Mammary epithelial cell (primary cell): ENCODE measurements at regions of chr3 and their contacts with region 1.

Region 1: GRCh38 chr3:159988617-159989271 is at the start of gene IL12A:
- DNase-seq: peak; percentile 54
- H3K4me3 ChIP-seq: peak within 1 kb of the TSS; percentile 64 to 79 (median 79)
- H3K27ac ChIP-seq: no peak within 1 kb of the TSS
- H3K4me1 ChIP-seq: peaks cover 19% of the 10 kb centered on the region
- H3K27me3 ChIP-seq: no peaks in the 10 kb centered on the region
- CTCF ChIP-seq: peak; percentile 83 to 95
- total RNA-seq, gene IL12A: 0.83 to 1.3 TPM

Region 2: DNA sequence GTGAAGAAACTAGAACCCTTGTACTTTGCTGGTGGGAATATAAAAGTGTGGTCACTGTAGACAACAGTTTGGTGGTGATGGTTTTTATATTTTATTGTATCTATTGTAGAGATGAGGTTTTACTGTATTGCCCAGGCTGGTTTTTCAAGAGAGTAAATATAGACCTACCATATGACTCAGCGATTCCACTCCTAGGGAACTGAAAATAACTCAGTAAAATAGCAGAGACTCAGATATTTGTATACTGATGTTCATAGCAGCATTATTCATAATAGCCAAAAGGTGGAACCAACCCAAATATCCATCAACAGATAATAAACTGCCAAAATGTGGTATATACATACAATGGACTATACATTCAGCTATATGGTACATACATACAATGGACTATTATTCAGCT is 68.9 kb before region 1 on chr3:
- CTCF ChIA-PET with region 1: interaction called, 4 read pairs
- dilution Hi-C with region 1: loop called (anchors 5 kb)
- in situ Hi-C with region 1: no loop called
- intact Hi-C with region 1: loop called (anchors 5 kb)
- DNase-seq: peak; percentile 29
- H3K4me3 ChIP-seq: no peak overlapping the region
- H3K27ac ChIP-seq: no peak overlapping the region
- H3K4me1 ChIP-seq: peaks cover 3% of the 10 kb centered on the region
- H3K27me3 ChIP-seq: no peaks in the 10 kb centered on the region
- CTCF ChIP-seq: no peak

Region 3: GRCh38 chr3:159929435-159930141 is 59.2 kb before region 1 on chr3:
- CTCF ChIA-PET with region 1: no interaction called
- dilution Hi-C with region 1: loop called (anchors 5 kb)
- in situ Hi-C with region 1: no loop called
- intact Hi-C with region 1: loop called (anchors 5 kb)
- DNase-seq: peak; percentile 50
- H3K4me3 ChIP-seq: no peak overlapping the region
- H3K27ac ChIP-seq: peak overlapping the region; percentile 85
- H3K4me1 ChIP-seq: peaks cover 28% of the 10 kb centered on the region
- H3K27me3 ChIP-seq: no peaks in the 10 kb centered on the region
- CTCF ChIP-seq: peak; percentile 20 to 24